Breast epithelium (tissue), 4 donors: ENCODE measurements at regions of chr12 and their contacts with region 1.

Region 1: DNA sequence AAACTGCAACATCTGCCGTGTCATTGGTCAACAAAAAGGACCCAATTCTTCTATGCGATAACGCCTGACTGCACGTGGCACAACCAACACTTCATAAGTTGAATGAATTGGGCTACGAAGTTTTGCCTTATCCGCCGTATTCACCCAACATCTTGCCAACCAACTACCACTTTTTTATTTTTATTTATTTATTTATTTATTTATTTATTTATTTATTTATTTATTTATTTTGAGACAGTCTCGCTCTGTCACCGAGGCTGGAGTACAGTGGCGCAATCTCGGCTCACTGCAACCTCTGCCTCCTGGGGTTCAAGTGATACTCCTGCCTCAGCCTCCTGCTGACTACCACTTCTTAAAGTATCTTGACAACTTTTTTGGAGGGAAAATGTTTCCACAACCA is 127.4 kb downstream of the RASSF9 start:
- DNase-seq: no peak
- H3K4me3 ChIP-seq: no peak overlapping the region
- H3K27ac ChIP-seq: no peak overlapping the region
- H3K4me1 ChIP-seq: no peaks in the 10 kb centered on the region
- H3K27me3 ChIP-seq: no peaks in the 10 kb centered on the region
- CTCF ChIP-seq: no peak
- POLR2A ChIP-seq: no peak

Region 2: DNA sequence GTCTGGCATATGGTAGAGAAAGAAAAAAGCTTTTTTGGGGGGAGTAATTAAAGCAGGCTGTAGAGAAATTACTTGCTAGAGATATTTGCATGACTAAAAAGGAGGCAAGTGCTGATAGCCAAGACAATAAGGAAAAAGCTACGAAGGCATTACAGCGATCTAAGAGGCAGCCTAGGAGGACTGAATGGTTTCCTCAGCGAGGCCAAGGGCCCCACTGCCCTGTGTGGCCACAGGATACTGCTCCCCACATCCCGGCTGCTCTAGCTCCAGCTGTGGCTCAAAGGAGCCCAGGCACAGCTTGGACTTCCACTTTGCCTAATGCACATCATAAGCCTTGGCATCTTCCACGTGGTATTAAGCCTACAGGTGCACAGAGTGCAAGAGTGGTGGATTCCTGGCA is 619.0 kb before region 1 on chr12:
- intact Hi-C with region 1: loop called (anchors 10 kb)
- DNase-seq: no peak
- H3K4me3 ChIP-seq: no peak overlapping the region
- H3K27ac ChIP-seq: no peak overlapping the region
- H3K4me1 ChIP-seq: no peaks in the 10 kb centered on the region
- H3K27me3 ChIP-seq: no peaks in the 10 kb centered on the region
- CTCF ChIP-seq: no peak
- POLR2A ChIP-seq: no peak

Region 3: DNA sequence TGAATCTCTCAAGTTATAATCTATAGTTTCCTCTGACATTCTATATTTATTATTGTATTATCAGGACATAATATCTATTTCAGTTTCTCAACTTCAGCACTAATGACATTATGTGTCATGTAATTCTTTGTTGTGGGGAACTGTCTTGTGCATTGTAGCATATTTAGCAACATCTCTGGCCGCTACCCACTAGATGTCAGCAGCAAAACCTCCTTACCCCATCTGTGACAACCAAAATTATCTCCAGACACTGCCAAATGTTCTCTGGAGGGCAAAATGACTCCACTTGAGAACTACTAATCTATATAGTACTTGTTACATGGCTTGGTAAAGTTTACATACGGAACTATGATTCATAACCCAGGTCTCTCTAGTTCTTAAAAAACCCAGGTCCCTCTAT is 17.2 kb after region 1 on chr12:
- intact Hi-C with region 1: no loop called
- DNase-seq: no peak
- H3K4me3 ChIP-seq: no peak overlapping the region
- H3K27ac ChIP-seq: no peak overlapping the region
- H3K4me1 ChIP-seq: no peaks in the 10 kb centered on the region
- H3K27me3 ChIP-seq: no peaks in the 10 kb centered on the region
- CTCF ChIP-seq: no peak
- POLR2A ChIP-seq: no peak

Region 4: GRCh38 chr12:85765443-85765842 is 56.7 kb after region 1 on chr12:
- intact Hi-C with region 1: no loop called
- DNase-seq: no peak
- H3K4me3 ChIP-seq: no peak overlapping the region
- H3K27ac ChIP-seq: no peak overlapping the region
- H3K4me1 ChIP-seq: no peaks in the 10 kb centered on the region
- H3K27me3 ChIP-seq: no peaks in the 10 kb centered on the region
- CTCF ChIP-seq: no peak
- POLR2A ChIP-seq: no peak